Right lobe of liver (tissue), 6 donors: ENCODE measurements at regions of chr15 and their contacts with region 1.

Region 1: GRCh38 chr15:90086868-90087268 is 15.4 kb downstream of the IDH2 start:
- DNase-seq: peak in 2 of 3 donors; percentile 53 to 60
- ATAC-seq: peak; percentile 44 to 66 (median 50)
- H3K4me3 ChIP-seq: no peak overlapping the region
- H3K27ac ChIP-seq: no peak overlapping the region
- H3K4me1 ChIP-seq: peaks cover 0 to 3% (median 0%) of the 10 kb centered on the region in 4 donors
- H3K27me3 ChIP-seq: no peaks in the 10 kb centered on the region
- CTCF ChIP-seq: peak; percentile 56 to 74 (median 65)
- POLR2A ChIP-seq: no peak

Region 2: DNA sequence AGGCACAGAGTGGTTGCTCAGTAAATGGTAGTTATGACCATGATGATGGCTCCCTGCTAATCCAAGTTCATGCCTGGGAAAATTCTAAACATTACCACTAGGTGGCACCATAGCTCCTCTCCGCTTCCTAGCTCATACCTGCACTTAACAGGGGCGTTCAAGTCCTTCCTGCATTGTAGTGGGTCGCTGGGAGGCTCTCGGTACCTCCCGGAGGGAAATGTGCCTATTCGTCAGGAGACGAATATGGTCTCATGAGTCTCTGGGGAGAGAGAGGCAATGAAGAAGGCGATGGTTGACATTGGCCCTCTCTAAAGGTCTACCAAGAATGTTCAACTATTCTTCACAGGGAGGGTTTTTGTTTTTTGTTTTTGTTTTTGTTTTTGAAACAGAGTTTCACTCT is 346.7 kb before region 1 on chr15:
- intact Hi-C with region 1: loop called in 1 of 2 experiments (anchors 10 kb)
- DNase-seq: peak in 1 of 3 donors; percentile 57
- ATAC-seq: peak; percentile 87 to 97 (median 94)
- H3K4me3 ChIP-seq: no peak overlapping the region
- H3K27ac ChIP-seq: no peak overlapping the region
- H3K4me1 ChIP-seq: no peaks in the 10 kb centered on the region
- H3K27me3 ChIP-seq: no peaks in the 10 kb centered on the region
- CTCF ChIP-seq: peak; percentile 90 to 95 (median 92)
- POLR2A ChIP-seq: no peak

Region 3: DNA sequence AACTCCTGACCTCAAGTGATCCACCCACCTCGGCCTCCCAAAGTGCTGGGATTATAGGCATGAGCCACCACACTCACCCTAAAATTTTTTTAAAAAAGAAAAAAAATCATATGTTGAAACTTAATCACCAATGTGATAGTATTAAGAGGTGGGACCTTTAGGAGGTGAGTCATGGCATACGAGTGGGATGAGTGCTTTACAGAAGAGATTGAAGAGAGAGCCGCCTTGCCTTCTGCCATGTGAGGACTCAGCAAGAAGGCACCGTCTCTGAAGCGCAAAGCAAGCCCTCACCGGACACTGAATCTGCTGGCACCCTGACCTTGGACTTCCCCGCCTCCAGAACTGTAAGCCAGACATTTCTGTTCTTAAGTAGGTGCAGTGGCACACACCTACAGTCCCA is 179.6 kb before region 1 on chr15:
- intact Hi-C with region 1: loop called in 1 of 2 experiments (anchors 10 kb)
- DNase-seq: no peak
- ATAC-seq: no peak
- H3K4me3 ChIP-seq: no peak overlapping the region
- H3K27ac ChIP-seq: no peak overlapping the region
- H3K4me1 ChIP-seq: peaks cover 0 to 11% (median 4%) of the 10 kb centered on the region in 4 donors
- H3K27me3 ChIP-seq: no peaks in the 10 kb centered on the region
- CTCF ChIP-seq: no peak
- POLR2A ChIP-seq: no peak